ENCODE measurements at regions of chr7 and their contacts with region 1.

Region 1: GRCh38 chr7:99990460-99990852 is 14.6 kb upstream of the AZGP1 start:
- DNase-seq: no peak
- ATAC-seq: no peak
- H3K4me3 ChIP-seq: no peak overlapping the region
- H3K4me3 Mint-ChIP-seq: peak overlapping the region in 2 of 10 donors; percentile 28 to 53
- H3K27ac ChIP-seq: no peak overlapping the region
- H3K27ac Mint-ChIP-seq: no peak overlapping the region
- H3K4me1 ChIP-seq: no peaks in the 10 kb centered on the region
- H3K4me1 Mint-ChIP-seq: peaks cover 0 to 12% (median 5%) of the 10 kb centered on the region in 7 donors
- H3K27me3 ChIP-seq: no peaks in the 10 kb centered on the region
- H3K27me3 Mint-ChIP-seq: peaks cover 0 to 22% (median 0%) of the 10 kb centered on the region in 5 donors

Region 2: DNA sequence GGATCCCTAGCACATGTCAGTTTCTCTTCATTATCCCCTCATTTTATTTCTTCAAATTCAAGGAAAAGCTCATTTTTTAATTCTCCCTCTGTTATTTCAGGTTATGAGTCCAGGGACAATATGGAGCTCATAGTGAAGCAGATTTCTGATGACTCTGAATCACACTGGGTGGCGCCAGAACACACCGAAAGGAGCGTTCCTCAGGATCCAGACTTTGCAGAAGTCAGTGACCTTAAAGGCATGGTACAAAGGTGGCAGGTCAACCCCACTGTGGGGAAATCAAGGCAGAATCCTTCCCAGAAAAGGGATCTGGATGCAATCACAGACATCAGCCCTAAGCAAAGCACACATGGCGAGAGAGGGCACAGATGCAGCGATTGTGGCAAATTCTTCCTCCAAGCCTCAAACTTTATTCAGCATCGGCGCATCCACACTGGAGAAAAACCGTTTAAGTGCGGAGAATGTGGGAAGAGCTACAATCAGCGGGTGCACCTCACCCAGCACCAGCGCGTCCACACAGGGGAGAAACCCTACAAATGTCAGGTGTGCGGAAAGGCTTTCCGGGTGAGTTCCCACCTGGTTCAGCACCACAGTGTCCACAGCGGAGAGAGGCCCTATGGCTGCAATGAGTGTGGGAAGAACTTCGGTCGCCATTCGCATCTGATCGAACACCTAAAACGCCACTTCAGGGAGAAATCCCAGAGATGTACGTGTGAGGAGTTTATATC is 464.6 kb before region 1 on chr7:
- CTCF ChIA-PET with region 1: interaction called, 4 read pairs
- POLR2A ChIA-PET with region 1: no interaction called
- intact Hi-C with region 1: loop called in 1 of 2 experiments (anchors 2 kb)
- DNase-seq: peak in 3 of 9 donors; percentile 7 to 23 (median 21)
- ATAC-seq: peak; percentile 53
- H3K4me3 ChIP-seq: no peak overlapping the region
- H3K4me3 Mint-ChIP-seq: no peak overlapping the region
- H3K27ac ChIP-seq: no peak overlapping the region
- H3K27ac Mint-ChIP-seq: peak overlapping the region in 5 of 9 donors; percentile 3 to 74 (median 32)
- H3K4me1 ChIP-seq: no peaks in the 10 kb centered on the region
- H3K4me1 Mint-ChIP-seq: peaks cover 0 to 6% (median 0%) of the 10 kb centered on the region in 7 donors
- H3K27me3 ChIP-seq: no peaks in the 10 kb centered on the region
- H3K27me3 Mint-ChIP-seq: no peaks in the 10 kb centered on the region

Region 3: GRCh38 chr7:99733448-99733847 is 257.0 kb before region 1 on chr7:
- CTCF ChIA-PET with region 1: no interaction called
- POLR2A ChIA-PET with region 1: no interaction called
- intact Hi-C with region 1: loop called in 1 of 2 experiments (anchors 2 kb)
- DNase-seq: peak in 1 of 9 donors; percentile 4
- ATAC-seq: no peak
- H3K4me3 ChIP-seq: no peak overlapping the region
- H3K4me3 Mint-ChIP-seq: no peak overlapping the region
- H3K27ac ChIP-seq: no peak overlapping the region
- H3K27ac Mint-ChIP-seq: no peak overlapping the region
- H3K4me1 ChIP-seq: no peaks in the 10 kb centered on the region
- H3K4me1 Mint-ChIP-seq: peaks cover 0 to 5% (median 0%) of the 10 kb centered on the region in 7 donors
- H3K27me3 ChIP-seq: no peaks in the 10 kb centered on the region
- H3K27me3 Mint-ChIP-seq: no peaks in the 10 kb centered on the region

Region 4: DNA sequence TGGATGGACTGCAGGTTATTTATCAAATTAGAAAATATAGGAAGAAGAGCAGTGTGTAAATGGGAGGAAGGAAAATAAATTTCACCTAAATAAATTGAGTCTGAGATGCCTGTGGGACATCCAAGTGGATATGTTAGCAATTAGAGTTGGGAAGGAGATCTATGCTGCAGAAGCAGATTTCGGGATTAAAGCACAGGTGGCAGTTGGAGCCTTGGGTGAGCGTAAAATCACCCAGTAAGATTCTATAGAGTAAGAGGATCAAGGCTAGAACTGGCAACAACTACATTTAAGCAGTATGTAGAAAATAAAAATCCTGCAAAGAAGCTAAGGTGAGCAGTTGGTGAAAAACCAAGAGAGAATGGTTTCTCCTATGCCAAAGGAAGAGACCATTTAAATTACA is 79.5 kb before region 1 on chr7:
- CTCF ChIA-PET with region 1: interaction called, 102 read pairs
- POLR2A ChIA-PET with region 1: interaction called, 6 read pairs
- intact Hi-C with region 1: loop called (anchors 1 kb)
- DNase-seq: no peak
- ATAC-seq: no peak
- H3K4me3 ChIP-seq: no peak overlapping the region
- H3K4me3 Mint-ChIP-seq: peak overlapping the region in 4 of 10 donors; percentile 17 to 49 (median 35)
- H3K27ac ChIP-seq: no peak overlapping the region
- H3K27ac Mint-ChIP-seq: peak overlapping the region in 3 of 9 donors; percentile 28 to 71 (median 64)
- H3K4me1 ChIP-seq: peaks cover 6 to 13% of the 10 kb centered on the region in 2 donors
- H3K4me1 Mint-ChIP-seq: peaks cover 22 to 82% (median 68%) of the 10 kb centered on the region in 7 donors
- H3K27me3 ChIP-seq: no peaks in the 10 kb centered on the region
- H3K27me3 Mint-ChIP-seq: no peaks in the 10 kb centered on the region

Region 5: GRCh38 chr7:99928994-99929729 is 61.3 kb before region 1 on chr7 and contains the start of gene GJC3:
- CTCF ChIA-PET with region 1: interaction called, 3 read pairs
- POLR2A ChIA-PET with region 1: no interaction called
- intact Hi-C with region 1: loop called in 1 of 2 experiments (anchors 1 kb)
- DNase-seq: peak in 8 of 9 donors; percentile 27 to 61 (median 52)
- ATAC-seq: peak; percentile 90
- H3K4me3 ChIP-seq: peak within 1 kb of the TSS; percentile 27
- H3K4me3 Mint-ChIP-seq: peak within 1 kb of the TSS; percentile 80 to 87 (median 84)
- H3K27ac ChIP-seq: peak within 1 kb of the TSS; percentile 29
- H3K27ac Mint-ChIP-seq: peak within 1 kb of the TSS; percentile 48 to 93 (median 85)
- H3K4me1 ChIP-seq: peaks cover 0 to 16% of the 10 kb centered on the region in 2 donors
- H3K4me1 Mint-ChIP-seq: peaks cover 17 to 33% (median 33%) of the 10 kb centered on the region in 7 donors
- H3K27me3 ChIP-seq: no peaks in the 10 kb centered on the region
- H3K27me3 Mint-ChIP-seq: peaks cover 0 to 44% (median 14%) of the 10 kb centered on the region in 5 donors
- total RNA-seq, gene GJC3: 0.41 to 1.1 (median 0.58) TPM in 4 of 5 experiments, not detected in the other

Region 6: GRCh38 chr7:99975782-99976521 is 14.5 kb before region 1 on chr7 and contains the start of gene AZGP1:
- CTCF ChIA-PET with region 1: interaction called, 4 read pairs
- POLR2A ChIA-PET with region 1: no interaction called
- intact Hi-C with region 1: loop called in 1 of 2 experiments (anchors 1 kb)
- DNase-seq: no peak
- ATAC-seq: no peak
- H3K4me3 ChIP-seq: no peak within 1 kb of the TSS
- H3K4me3 Mint-ChIP-seq: no peak within 1 kb of the TSS
- H3K27ac ChIP-seq: no peak within 1 kb of the TSS
- H3K27ac Mint-ChIP-seq: no peak within 1 kb of the TSS
- H3K4me1 ChIP-seq: no peaks in the 10 kb centered on the region
- H3K4me1 Mint-ChIP-seq: peaks cover 0 to 12% (median 5%) of the 10 kb centered on the region in 7 donors
- H3K27me3 ChIP-seq: no peaks in the 10 kb centered on the region
- H3K27me3 Mint-ChIP-seq: peaks cover 0 to 22% (median 3%) of the 10 kb centered on the region in 5 donors
- total RNA-seq, gene AZGP1: not detected

Region 7: DNA sequence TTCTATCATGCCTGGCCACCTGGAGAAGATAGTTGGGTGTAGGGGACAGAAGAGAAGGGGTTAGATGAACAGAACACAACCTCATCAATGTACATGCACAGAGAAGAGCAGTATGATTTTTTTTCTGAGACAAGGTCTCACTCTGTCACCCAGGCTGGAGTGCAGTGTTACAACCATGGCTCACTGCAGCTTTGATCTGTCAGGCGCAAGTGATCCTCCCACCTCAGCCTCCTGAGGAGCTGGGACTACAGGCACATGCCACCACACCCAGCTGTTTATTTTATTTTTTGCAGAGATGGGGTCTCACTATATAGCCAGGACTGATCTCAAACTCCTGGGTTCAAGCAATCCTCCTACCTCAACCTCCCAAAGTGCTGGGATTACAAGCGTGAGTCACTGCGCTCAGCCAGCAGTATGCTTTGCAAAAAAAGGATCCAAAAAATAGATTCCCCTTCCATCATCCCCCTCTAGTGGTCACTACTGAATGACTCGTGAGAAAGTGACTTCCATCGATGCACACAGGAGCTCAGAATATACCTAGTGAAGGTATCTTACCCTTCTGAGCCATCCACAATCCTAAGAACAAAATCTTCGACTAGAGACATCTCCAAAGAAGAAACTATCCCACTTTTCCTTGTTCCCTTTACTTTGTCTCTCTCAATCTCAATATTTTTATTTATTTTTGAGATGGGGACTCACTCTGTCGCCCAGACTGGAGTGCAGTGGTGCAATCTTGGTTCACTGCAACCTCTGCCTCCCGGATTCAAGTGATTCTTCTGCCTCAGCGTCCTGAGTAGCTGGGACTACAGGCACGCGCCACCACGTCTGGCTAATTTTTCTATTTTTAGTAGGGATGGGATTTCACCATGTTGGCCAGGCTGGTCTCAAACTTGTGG is 417.1 kb after region 1 on chr7:
- CTCF ChIA-PET with region 1: no interaction called
- POLR2A ChIA-PET with region 1: no interaction called
- intact Hi-C with region 1: loop called in 1 of 2 experiments (anchors 5 kb)
- DNase-seq: peak in 7 of 9 donors; percentile 35 to 69 (median 53)
- ATAC-seq: peak; percentile 97
- H3K4me3 ChIP-seq: no peak overlapping the region
- H3K4me3 Mint-ChIP-seq: no peak overlapping the region
- H3K27ac ChIP-seq: no peak overlapping the region
- H3K27ac Mint-ChIP-seq: peak overlapping the region in 1 of 9 donors; percentile 65
- H3K4me1 ChIP-seq: no peaks in the 10 kb centered on the region
- H3K4me1 Mint-ChIP-seq: peaks cover 0 to 5% (median 2%) of the 10 kb centered on the region in 7 donors
- H3K27me3 ChIP-seq: no peaks in the 10 kb centered on the region
- H3K27me3 Mint-ChIP-seq: peaks cover 0 to 32% (median 0%) of the 10 kb centered on the region in 5 donors

Region 8: DNA sequence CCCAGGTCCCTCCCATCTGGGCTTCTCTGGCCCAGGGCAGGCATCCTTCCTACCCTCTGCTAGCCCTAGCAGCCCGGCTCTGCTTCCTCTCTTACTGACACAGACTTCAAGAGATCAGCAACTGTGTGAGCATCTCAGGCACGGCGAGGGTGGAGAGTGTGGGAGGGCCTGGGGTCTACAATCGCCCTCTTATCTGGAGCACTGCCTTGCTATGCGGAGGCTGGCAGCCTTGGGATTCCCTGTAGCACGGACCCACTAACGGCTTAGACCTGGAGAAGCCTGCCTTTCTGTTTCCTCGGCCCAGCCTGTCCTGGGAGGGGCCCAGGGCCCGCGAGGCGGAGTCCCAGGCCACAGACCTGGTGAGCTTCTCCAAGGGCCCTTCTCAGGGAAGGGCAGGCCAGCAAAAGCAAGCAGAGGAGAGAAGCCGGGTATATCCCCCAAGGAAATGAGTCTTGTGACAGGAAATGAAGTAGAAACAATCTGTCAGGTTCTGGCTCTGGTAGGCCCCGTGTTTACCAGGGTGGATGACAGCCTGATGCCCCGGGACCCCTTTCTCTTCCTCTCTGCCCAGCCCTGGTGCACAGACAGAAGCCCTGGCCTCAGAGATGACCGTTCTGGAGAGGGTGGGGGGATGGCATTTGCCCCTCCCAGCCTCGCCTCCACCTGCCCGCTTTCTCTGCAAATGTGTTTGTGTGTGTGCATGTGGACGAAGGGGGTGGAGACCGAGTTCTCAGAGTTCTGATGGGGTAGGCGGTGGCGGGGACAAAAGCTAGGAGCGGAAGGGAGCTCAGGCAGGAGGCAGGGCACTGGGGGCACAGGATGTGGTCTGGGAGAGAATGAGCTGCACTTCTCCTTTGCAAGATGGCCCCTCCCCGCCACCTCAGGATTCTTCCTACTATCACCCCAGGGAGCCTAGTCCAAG is 592.9 kb after region 1 on chr7:
- CTCF ChIA-PET with region 1: no interaction called
- POLR2A ChIA-PET with region 1: no interaction called
- intact Hi-C with region 1: no loop called
- DNase-seq: peak; percentile 39 to 85 (median 79)
- ATAC-seq: no peak
- H3K4me3 ChIP-seq: peak overlapping the region; percentile 94
- H3K4me3 Mint-ChIP-seq: peak overlapping the region; percentile 95 to 100 (median 99)
- H3K27ac ChIP-seq: peak overlapping the region; percentile 90
- H3K27ac Mint-ChIP-seq: peak overlapping the region in 7 of 9 donors; percentile 91 to 99 (median 97)
- H3K4me1 ChIP-seq: peaks cover 24 to 28% of the 10 kb centered on the region in 2 donors
- H3K4me1 Mint-ChIP-seq: peaks cover 22 to 44% (median 28%) of the 10 kb centered on the region in 7 donors
- H3K27me3 ChIP-seq: no peaks in the 10 kb centered on the region
- H3K27me3 Mint-ChIP-seq: peaks cover 0 to 1% (median 0%) of the 10 kb centered on the region in 5 donors

Measured in naive thymus-derived CD4-positive, alpha-beta T cell (primary cell).